Esophagus muscularis mucosa (tissue), 4 donors: ENCODE measurements at regions of chr18 and their contacts with region 1.

Region 1: GRCh38 chr18:74652392-74652988 is 54.8 kb downstream of the ZNF407 start:
- DNase-seq: no peak
- H3K4me3 ChIP-seq: no peak overlapping the region
- H3K27ac ChIP-seq: no peak overlapping the region
- H3K4me1 ChIP-seq: no peaks in the 10 kb centered on the region
- H3K27me3 ChIP-seq: no peaks in the 10 kb centered on the region
- CTCF ChIP-seq: peak; percentile 52 to 58 (median 53)
- EP300 ChIP-seq: no peak
- POLR2A ChIP-seq: no peak

Region 2: DNA sequence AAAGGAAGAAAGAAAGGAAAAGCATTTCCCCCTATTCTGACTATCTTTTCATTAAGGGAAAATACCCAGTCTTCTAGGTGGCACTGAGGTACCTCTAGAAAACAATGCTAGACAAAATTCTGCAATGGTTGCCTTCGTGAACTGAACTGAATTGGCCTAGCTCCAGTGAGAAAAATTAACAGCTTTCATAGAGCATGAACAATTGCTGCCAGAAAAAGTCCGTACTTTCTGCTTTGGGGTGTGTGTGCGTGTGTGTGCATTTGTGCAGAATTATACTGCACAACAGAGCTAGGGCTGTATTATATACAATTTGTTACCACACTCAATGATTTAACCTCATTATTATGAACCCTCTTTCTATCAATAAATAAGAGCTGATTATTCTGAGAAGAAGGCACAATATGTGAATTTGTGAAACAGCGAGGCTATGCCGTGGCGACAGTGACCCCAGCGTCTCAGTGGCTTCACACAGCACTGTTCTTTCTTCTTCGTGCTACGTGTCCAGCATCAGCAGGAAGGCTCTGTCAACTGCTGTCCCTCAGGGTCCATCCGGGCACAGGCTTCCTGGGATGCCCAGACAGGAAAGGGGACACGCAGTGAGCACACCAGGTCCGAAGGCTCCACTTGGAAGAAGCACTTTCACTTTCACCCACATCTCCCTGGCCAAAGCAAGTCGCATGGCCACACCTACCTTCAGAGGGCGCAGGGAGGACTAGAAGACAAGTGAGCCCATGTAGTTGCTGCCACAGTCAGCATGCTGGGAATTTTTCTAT is 509.0 kb after region 1 on chr18:
- intact Hi-C with region 1: loop called (anchors 10 kb)
- DNase-seq: no peak
- H3K4me3 ChIP-seq: peak overlapping the region; percentile 34 to 57 (median 44)
- H3K27ac ChIP-seq: peak overlapping the region in 1 of 4 donors; percentile 11
- H3K4me1 ChIP-seq: peaks cover 9 to 26% (median 20%) of the 10 kb centered on the region in 4 donors
- H3K27me3 ChIP-seq: peaks cover 0 to 5% (median 0%) of the 10 kb centered on the region in 4 donors
- CTCF ChIP-seq: no peak
- EP300 ChIP-seq: no peak
- POLR2A ChIP-seq: no peak

Region 3: DNA sequence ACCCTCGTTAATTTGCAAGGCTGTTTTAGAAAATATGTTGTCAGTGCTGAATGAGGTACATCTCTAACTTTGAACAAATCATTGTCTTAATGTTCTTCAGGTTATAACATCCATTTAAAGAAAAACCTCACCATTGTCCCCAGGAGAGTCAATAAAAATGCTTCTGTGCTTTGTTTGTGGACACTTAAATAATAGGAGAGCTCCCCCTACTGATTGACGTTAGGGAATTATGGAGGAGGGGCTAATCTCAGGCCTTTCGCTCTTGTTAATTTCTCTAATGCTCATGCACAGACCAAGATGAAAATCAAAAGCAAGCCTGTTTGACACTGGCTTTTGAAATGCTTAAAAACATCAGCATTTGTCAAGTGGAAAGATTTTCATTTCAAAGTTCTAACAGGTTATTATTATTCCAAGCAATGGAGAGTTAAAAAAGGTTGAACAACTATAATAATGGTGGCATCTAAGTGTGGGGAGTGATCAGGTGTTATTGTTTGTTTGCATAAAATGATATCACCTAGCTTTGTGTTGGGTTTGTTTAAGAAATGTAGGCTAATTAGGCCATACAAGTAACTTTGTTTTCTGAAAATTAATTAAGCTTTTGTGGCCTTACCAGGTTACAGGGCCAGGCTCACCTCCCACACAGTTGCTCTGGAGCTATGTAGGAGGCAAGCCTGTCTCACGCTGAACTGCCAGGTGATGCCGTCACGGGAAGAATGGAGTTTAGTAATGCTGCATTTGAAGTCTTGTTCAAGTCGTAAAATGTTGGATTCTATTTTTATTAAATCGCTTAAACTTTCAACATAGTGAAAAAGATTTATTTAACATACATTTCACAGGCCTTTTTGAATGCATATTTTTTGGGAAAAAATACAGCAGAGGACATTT is 826.7 kb after region 1 on chr18:
- intact Hi-C with region 1: loop called (anchors 5 kb)
- DNase-seq: no peak
- H3K4me3 ChIP-seq: no peak overlapping the region
- H3K27ac ChIP-seq: no peak overlapping the region
- H3K4me1 ChIP-seq: peaks cover 0 to 10% (median 7%) of the 10 kb centered on the region in 4 donors
- H3K27me3 ChIP-seq: no peaks in the 10 kb centered on the region
- CTCF ChIP-seq: peak; percentile 53 to 64 (median 62)
- EP300 ChIP-seq: no peak
- POLR2A ChIP-seq: no peak

Region 4: DNA sequence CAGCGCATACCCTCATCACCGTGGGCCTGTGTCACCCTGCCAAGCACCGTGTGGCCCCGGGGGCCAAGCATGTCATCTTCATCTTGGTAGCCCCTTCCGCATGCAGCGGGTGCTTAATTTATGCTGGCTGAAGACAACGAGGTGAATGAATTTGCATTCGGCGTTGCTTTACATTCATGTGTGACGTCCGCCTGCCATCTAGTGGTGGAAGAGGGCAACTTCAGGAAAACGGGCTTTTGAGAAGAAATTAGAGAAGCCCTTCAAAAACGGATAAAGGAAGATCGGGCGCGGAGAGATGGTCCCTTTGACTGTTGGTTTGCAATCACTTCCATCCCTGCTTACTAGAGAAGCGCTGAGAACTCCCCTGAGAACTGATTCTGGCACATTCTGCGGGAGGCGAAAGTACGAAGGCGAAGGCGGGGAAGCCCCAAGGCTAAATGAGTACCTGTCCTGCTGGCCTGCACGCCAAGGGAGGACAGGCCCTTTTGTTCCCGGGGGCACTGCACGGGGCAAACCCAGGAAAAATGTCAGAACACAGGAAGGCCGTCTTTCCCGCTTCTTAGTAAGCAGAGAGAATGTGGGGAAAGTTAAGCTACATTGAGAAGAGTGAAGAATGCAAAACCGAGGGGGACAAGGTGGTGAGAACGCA is 1696.7 kb after region 1 on chr18:
- intact Hi-C with region 1: loop called (anchors 5 kb)
- DNase-seq: peak; percentile 93
- H3K4me3 ChIP-seq: peak overlapping the region in 1 of 4 donors; percentile 9
- H3K27ac ChIP-seq: no peak overlapping the region
- H3K4me1 ChIP-seq: peaks cover 1 to 32% (median 29%) of the 10 kb centered on the region in 4 donors
- H3K27me3 ChIP-seq: no peaks in the 10 kb centered on the region
- CTCF ChIP-seq: peak; percentile 73 to 89 (median 79)
- EP300 ChIP-seq: no peak
- POLR2A ChIP-seq: no peak